ENCODE measurements at regions of chr1 and their contacts with region 1.

Region 1: DNA sequence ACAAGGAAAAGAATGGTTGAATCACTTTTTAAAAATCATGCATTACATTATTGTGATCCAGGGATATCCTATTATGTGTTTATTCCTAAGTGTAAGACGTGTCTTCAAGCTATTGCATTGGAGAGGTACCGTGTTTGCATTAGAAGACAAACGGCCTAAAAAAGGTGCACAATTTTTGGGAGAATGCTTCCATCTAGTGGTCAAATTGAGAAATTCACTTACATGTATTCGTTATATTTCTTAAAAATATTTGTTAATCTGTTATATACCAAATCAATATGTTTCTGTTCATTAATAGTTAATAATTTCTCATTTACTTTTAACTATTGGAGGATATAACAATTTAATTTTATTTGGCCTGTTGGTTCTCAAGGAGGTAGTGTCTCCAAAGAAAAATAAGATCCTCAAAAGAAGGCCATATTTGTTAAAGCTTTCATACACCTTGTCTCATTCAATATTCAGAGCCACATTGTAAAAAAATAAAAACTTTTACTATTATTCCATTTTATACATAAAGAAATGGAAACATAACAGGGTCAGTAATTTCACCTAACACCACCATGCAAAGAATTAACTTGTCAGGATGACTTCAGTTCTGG is 40.5 kb upstream of the KCTD3 start:
- DNase-seq: peak; percentile 28
- H3K4me3 ChIP-seq: no peak overlapping the region
- H3K27ac ChIP-seq: no peak overlapping the region
- H3K4me1 ChIP-seq: no peaks in the 10 kb centered on the region
- H3K27me3 ChIP-seq: no peaks in the 10 kb centered on the region
- CTCF ChIP-seq: peak; percentile 36 to 56

Region 2: GRCh38 chr1:214660862-214661261 is 865.8 kb before region 1 on chr1:
- CTCF ChIA-PET with region 1: no interaction called
- dilution Hi-C with region 1: loop called (anchors 25 kb)
- in situ Hi-C with region 1: loop called (anchors 10 kb)
- intact Hi-C with region 1: loop called (anchors 1 kb)
- DNase-seq: no peak
- H3K4me3 ChIP-seq: no peak overlapping the region
- H3K27ac ChIP-seq: no peak overlapping the region
- H3K4me1 ChIP-seq: no peaks in the 10 kb centered on the region
- H3K27me3 ChIP-seq: no peaks in the 10 kb centered on the region
- CTCF ChIP-seq: peak; percentile 52 to 67

Region 3: GRCh38 chr1:214816603-214817002 is 710.0 kb before region 1 on chr1:
- CTCF ChIA-PET with region 1: no interaction called
- dilution Hi-C with region 1: no loop called
- in situ Hi-C with region 1: loop called in 1 of 2 experiments (anchors 10 kb)
- intact Hi-C with region 1: no loop called
- DNase-seq: no peak
- H3K4me3 ChIP-seq: no peak overlapping the region
- H3K27ac ChIP-seq: no peak overlapping the region
- H3K4me1 ChIP-seq: no peaks in the 10 kb centered on the region
- H3K27me3 ChIP-seq: no peaks in the 10 kb centered on the region
- CTCF ChIP-seq: peak in 1 of 2 donors; percentile 19

Region 4: DNA sequence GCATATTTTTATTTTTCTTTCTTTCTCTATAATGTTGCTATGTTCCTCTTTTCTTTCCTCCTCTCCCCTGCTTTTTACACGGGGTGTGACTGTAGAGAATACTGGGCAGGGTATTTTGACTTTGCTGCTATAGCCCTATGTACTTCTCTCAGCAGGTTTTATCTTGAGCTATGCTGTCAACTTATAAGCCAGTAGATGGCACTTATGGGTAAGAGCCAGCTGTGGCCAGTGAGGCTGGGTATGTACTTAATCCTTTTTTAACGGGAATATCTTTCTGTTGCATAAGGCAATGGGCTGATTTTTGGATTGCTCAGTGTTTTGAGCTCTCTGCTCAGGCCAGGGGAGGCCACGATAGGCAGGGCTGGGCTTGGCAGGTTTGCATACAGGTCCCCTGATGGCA is 345.1 kb before region 1 on chr1:
- CTCF ChIA-PET with region 1: interaction called, 3 read pairs
- dilution Hi-C with region 1: no loop called
- in situ Hi-C with region 1: loop called (anchors 10 to 25 kb)
- intact Hi-C with region 1: no loop called
- DNase-seq: peak; percentile 8
- H3K4me3 ChIP-seq: no peak overlapping the region
- H3K27ac ChIP-seq: no peak overlapping the region
- H3K4me1 ChIP-seq: no peaks in the 10 kb centered on the region
- H3K27me3 ChIP-seq: no peaks in the 10 kb centered on the region
- CTCF ChIP-seq: peak; percentile 6 to 55

Region 5: GRCh38 chr1:216332462-216332861 is 805.8 kb after region 1 on chr1:
- CTCF ChIA-PET with region 1: no interaction called
- dilution Hi-C with region 1: no loop called
- in situ Hi-C with region 1: no loop called
- intact Hi-C with region 1: no loop called
- DNase-seq: no peak
- H3K4me3 ChIP-seq: no peak overlapping the region
- H3K27ac ChIP-seq: no peak overlapping the region
- H3K4me1 ChIP-seq: peaks cover 4% of the 10 kb centered on the region
- H3K27me3 ChIP-seq: no peaks in the 10 kb centered on the region
- CTCF ChIP-seq: no peak

Measured in mammary epithelial cell (primary cell).